Mammary epithelial cell (primary cell): ENCODE measurements at regions of chr6 and their contacts with region 1.

Region 1: GRCh38 chr6:32190054-32190851 is at the start of gene PBX2:
- DNase-seq: peak; percentile 82
- H3K4me3 ChIP-seq: peak within 1 kb of the TSS; percentile 55 to 63 (median 59)
- H3K27ac ChIP-seq: peak within 1 kb of the TSS; percentile 58
- H3K4me1 ChIP-seq: peaks cover 17% of the 10 kb centered on the region
- H3K27me3 ChIP-seq: no peaks in the 10 kb centered on the region
- CTCF ChIP-seq: no peak
- total RNA-seq, gene PBX2: 28.5 to 59.1 TPM

Region 2: DNA sequence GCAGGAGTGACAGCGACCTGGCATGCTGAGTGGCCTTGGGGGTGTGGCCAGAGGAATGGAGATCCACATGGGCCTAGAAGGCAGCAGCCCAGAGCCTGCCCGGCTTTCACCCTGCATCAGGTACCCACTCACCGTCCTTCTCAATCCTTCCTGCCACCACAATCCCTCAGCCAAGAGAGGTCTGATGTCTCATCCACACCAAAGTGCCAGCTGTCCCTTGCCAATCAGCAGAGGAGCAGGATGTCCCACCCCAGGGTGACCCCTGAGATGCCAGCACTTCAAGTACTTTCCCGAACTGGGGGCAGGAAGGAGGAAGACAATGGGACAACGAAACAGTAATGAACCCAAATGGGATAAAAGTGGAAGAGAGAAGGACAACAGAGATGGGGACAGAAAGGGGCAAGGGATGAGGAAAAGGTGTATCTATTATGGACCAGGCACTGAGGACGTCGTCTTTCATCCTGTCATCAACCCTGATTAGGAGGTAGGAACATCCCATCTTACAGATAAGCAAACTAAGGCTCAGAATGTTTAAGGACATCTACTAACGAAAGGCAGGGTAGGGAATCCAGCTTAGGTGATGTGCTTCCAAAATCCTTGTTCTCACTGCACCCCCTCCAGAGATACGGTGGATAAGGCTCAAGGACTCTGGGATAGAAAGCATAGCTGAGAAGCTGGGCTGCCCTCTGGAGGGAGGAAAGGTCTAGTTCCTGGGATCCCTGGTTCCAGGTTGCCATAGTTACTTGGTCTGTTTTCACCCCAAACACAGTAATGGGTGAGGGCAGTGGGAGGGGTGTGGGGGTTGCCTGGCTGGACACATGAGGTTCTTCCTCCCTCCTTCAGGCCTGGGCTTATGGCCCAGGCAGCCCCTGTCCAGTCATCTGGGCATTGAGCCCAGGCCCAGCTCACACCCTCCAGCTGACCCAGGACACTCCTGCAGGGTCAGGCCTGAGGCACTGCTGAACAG is 76.6 kb before region 1 on chr6:
- CTCF ChIA-PET with region 1: no interaction called
- dilution Hi-C with region 1: no loop called
- in situ Hi-C with region 1: no loop called
- intact Hi-C with region 1: no loop called
- DNase-seq: no peak
- H3K4me3 ChIP-seq: no peak overlapping the region
- H3K27ac ChIP-seq: peak overlapping the region; percentile 40
- H3K4me1 ChIP-seq: peaks cover 5% of the 10 kb centered on the region
- H3K27me3 ChIP-seq: no peaks in the 10 kb centered on the region
- CTCF ChIP-seq: peak in 1 of 2 donors; percentile 12

Region 3: GRCh38 chr6:32177788-32178546 is 12.3 kb before region 1 on chr6 and contains the start of gene RNF5:
- CTCF ChIA-PET with region 1: interaction called, 3 read pairs
- dilution Hi-C with region 1: no loop called
- in situ Hi-C with region 1: no loop called
- intact Hi-C with region 1: loop called (anchors 1 kb)
- DNase-seq: peak; percentile 100
- H3K4me3 ChIP-seq: peak within 1 kb of the TSS; percentile 52 to 94 (median 69)
- H3K27ac ChIP-seq: peak within 1 kb of the TSS; percentile 94
- H3K4me1 ChIP-seq: peaks cover 36% of the 10 kb centered on the region
- H3K27me3 ChIP-seq: no peaks in the 10 kb centered on the region
- CTCF ChIP-seq: no peak
- total RNA-seq, gene RNF5: 28.4 to 28.7 TPM

Region 4: DNA sequence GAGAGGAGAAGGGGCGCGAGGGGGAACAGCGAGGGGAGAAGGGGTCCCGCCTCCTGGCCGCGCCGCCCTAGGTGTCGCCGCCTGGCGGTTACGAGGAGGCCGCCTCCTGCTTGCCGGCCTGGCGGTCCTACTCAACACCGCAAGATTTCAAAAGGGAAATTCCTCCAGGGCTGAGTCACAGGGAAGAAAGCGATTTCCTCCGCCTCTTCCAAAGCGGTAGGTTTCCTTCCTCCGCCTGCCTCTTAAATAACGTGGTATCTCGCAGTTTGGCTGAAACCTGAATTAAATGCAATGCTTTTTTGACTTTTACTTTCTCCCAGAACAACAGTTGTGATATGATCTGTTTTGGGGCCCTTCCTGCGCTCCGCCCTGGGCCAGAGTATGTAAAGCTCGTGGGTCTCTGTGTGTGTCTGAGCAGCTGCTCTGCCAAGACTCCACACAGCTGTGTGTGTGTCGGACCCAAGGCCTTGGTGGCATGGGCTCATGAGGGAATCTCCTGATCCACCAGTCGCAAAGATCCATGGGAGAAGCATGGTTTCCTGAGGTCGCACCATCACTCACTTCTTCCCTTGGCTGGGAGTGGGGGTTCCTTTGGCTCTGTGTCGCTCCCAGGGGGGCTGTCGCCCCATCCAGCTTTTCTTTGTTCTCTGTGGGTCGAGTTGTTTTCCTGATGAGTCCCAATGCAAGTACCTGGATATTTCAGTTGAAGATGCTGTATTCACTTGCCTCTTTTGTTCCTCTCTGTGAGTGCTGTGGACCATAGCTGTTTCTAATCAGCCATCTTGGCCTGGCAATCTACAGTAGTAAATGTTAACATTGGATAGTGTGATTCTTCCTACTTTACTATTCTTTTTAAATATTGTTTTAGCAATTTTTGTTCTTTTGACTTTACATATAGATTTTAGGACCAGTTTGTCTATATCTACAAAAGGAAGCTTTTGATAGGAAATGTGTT is 65.2 kb after region 1 on chr6:
- CTCF ChIA-PET with region 1: no interaction called
- dilution Hi-C with region 1: no loop called
- in situ Hi-C with region 1: no loop called
- intact Hi-C with region 1: no loop called
- DNase-seq: peak; percentile 81
- H3K4me3 ChIP-seq: peak overlapping the region; percentile 21 to 32 (median 24)
- H3K27ac ChIP-seq: peak overlapping the region; percentile 25
- H3K4me1 ChIP-seq: peaks cover 6% of the 10 kb centered on the region
- H3K27me3 ChIP-seq: no peaks in the 10 kb centered on the region
- CTCF ChIP-seq: peak; percentile 20 to 76

Region 5: GRCh38 chr6:32290886-32291450 is 100.7 kb after region 1 on chr6:
- CTCF ChIA-PET with region 1: no interaction called
- dilution Hi-C with region 1: no loop called
- in situ Hi-C with region 1: no loop called
- intact Hi-C with region 1: no loop called
- DNase-seq: no peak
- H3K4me3 ChIP-seq: no peak overlapping the region
- H3K27ac ChIP-seq: no peak overlapping the region
- H3K4me1 ChIP-seq: no peaks in the 10 kb centered on the region
- H3K27me3 ChIP-seq: peaks cover 6% of the 10 kb centered on the region
- CTCF ChIP-seq: no peak

Region 6: GRCh38 chr6:32752580-32752979 is 562.3 kb after region 1 on chr6:
- CTCF ChIA-PET with region 1: no interaction called
- dilution Hi-C with region 1: no loop called
- in situ Hi-C with region 1: no loop called
- intact Hi-C with region 1: no loop called
- DNase-seq: peak; percentile 69
- H3K4me3 ChIP-seq: no peak overlapping the region
- H3K27ac ChIP-seq: no peak overlapping the region
- H3K4me1 ChIP-seq: no peaks in the 10 kb centered on the region
- H3K27me3 ChIP-seq: no peaks in the 10 kb centered on the region
- CTCF ChIP-seq: no peak